Sigmoid colon (tissue), 7 donors: ENCODE measurements at regions of chr10 and their contacts with region 1.

Region 1: DNA sequence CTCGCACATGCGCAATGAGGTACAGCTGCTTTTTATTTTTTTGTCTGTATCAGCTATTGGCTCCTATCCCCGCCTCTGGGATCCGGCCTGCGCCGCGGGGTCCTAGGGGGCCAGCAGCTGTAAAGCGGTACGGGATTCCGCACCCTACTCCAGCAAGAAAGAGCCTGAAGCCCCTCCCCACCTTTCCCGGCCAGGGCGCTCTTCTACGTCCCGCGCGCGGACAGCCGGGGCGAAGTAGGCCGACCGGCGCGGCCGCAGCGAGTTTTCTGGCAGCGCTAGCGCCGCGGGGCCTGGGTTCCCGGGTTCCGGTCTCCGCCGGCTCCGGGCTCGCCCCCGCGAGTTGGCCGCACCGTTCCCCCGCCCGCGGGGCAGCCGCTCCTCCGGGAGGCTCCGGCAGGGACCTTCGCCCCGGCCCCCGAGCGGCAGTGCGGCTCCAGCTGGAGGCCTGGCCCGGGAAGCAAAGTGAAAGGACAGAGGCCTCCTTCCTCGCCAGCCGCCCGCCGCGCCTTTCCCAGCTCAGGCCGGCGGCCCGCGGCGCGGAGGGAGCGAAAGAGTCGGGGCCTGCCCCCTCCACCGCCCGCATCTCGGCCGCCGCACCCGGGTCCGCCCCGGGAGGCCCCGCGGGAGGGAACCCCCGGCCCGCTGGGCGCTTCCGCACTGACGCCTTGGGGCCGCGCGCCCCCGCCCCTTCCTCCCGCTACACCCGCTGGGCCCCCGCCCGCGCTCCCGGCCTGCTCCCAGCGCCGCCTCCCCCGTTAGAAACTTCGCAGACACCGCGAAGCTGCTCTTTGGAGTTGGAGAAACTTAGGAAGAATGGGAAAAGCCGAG is 4.7 kb upstream of the SPAG6 start:
- DNase-seq: peak; percentile 82
- H3K4me3 ChIP-seq: peak overlapping the region; percentile 53 to 84 (median 72)
- H3K27ac ChIP-seq: peak overlapping the region; percentile 91 to 98 (median 96)
- H3K4me1 ChIP-seq: peaks cover 0 to 35% (median 30%) of the 10 kb centered on the region in 4 donors
- H3K27me3 ChIP-seq: peaks cover 75 to 89% (median 79%) of the 10 kb centered on the region in 3 donors
- CTCF ChIP-seq: no peak
- EP300 ChIP-seq: no peak
- POLR2A ChIP-seq: peak; percentile 34 to 37

Region 2: GRCh38 chr10:21525367-21526183 is 815.0 kb before region 1 on chr10 and contains the start of gene SKIDA1:
- intact Hi-C with region 1: loop called (anchors 5 kb)
- DNase-seq: peak; percentile 93
- H3K4me3 ChIP-seq: peak within 1 kb of the TSS; percentile 49 to 74 (median 68)
- H3K27ac ChIP-seq: peak within 1 kb of the TSS; percentile 97 to 99 (median 98)
- H3K4me1 ChIP-seq: peaks cover 0 to 54% (median 28%) of the 10 kb centered on the region in 4 donors
- H3K27me3 ChIP-seq: no peaks in the 10 kb centered on the region
- CTCF ChIP-seq: no peak
- EP300 ChIP-seq: peak in 2 of 4 donors; percentile 17 to 42
- POLR2A ChIP-seq: no peak
- total RNA-seq, gene SKIDA1: 0.82 to 4.2 (median 3.4) TPM

Region 3: DNA sequence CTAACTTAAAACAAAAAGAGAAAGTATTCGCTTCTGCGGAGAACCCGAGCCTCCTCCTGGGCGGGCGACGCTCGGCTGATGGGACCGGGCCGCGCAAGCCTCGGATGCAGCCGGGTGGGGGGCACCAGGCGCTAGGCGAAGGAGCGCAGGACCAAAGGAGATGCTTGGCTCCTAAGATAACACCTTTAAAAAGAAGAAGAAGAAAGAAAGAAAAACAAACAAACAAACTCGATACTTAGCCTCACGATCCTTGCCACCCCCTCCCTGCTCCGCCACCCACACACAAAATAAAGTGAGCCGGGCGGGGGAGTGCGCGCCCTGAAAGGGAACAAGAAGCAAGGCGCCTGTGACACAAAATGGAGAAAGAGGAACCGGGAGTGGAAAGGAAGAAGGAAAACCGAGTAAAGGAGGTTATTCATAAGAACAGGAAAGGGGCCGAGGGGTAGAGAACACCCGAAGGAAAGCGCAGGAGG is 88.8 kb before region 1 on chr10:
- intact Hi-C with region 1: loop called (anchors 2 kb)
- DNase-seq: peak; percentile 79
- H3K4me3 ChIP-seq: peak overlapping the region; percentile 61 to 86 (median 74)
- H3K27ac ChIP-seq: peak overlapping the region; percentile 94 to 97 (median 96)
- H3K4me1 ChIP-seq: peaks cover 0 to 10% (median 5%) of the 10 kb centered on the region in 4 donors
- H3K27me3 ChIP-seq: no peaks in the 10 kb centered on the region
- CTCF ChIP-seq: no peak
- EP300 ChIP-seq: no peak
- POLR2A ChIP-seq: no peak

Region 4: DNA sequence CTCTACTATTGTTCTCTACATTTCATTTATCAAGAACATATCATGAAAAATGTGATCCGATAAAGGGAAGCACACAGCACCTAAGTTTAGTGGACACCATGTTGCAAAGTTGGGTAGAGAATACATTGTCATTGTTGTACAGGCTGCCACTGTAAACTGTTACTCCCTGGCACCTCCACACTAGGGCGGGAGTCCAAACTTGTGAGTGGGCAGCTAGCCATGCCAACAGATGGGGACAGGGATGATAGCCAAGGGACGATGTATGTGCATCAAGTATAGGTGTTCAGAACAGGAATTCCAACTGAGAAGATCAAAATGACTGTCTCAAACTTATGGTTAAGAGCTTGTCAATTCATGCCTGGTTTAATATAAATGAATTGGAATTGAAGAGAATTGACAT is 55.4 kb before region 1 on chr10:
- intact Hi-C with region 1: no loop called
- DNase-seq: no peak
- H3K4me3 ChIP-seq: no peak overlapping the region
- H3K27ac ChIP-seq: no peak overlapping the region
- H3K4me1 ChIP-seq: no peaks in the 10 kb centered on the region
- H3K27me3 ChIP-seq: no peaks in the 10 kb centered on the region
- CTCF ChIP-seq: no peak
- EP300 ChIP-seq: no peak
- POLR2A ChIP-seq: no peak

Region 5: DNA sequence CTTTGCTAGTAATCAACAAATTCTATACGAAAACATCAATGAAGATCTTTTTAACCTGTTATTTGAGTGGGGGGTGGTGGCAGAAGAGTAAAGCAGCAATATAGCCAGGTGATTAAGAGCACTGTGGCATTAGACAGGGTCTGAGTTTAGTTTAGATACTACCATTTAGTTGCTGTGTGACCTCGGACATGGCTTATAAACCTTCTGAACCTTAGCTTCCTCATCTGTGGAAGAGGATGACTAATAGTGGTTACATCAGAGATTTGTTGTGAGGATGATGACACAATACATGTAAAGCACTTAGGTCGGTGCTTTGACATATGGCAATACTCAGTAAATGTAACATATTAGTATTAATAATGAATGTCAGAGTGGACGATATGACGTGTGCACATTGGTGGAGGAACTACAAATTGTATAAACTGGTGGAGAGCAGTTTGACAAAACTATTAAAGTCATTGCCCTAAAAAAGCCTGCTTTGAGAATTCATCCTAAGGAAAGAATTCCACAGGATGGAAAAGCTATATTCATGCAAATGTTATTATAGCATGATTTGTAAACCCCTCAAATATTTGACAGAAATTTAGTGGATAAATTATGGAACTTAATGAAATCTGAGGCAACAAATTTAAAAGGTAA is 29.0 kb after region 1 on chr10:
- intact Hi-C with region 1: no loop called
- DNase-seq: no peak
- H3K4me3 ChIP-seq: no peak overlapping the region
- H3K27ac ChIP-seq: no peak overlapping the region
- H3K4me1 ChIP-seq: peaks cover 0 to 6% (median 3%) of the 10 kb centered on the region in 4 donors
- H3K27me3 ChIP-seq: peaks cover 0 to 4% (median 0%) of the 10 kb centered on the region in 3 donors
- CTCF ChIP-seq: no peak
- EP300 ChIP-seq: no peak
- POLR2A ChIP-seq: no peak

Region 6: DNA sequence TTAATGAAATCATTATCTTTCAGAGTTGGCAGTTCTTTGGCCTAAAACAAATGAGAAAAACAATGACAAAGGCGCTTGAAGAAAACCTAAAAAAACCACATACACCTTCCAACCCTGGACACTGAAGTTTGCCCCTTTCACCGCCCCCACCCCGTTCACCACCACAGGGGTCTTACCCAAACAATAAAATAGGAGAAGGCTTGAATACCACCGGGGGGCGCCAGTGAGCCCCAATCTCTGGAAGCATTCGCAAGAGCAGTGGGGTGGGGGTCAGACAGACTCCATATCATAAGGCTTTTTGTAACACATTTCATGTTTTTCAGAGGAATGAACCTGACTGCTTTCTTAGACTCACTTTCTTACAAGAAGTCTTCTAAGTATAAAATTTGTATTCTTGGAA is 210.2 kb after region 1 on chr10:
- intact Hi-C with region 1: loop called (anchors 10 kb)
- DNase-seq: no peak
- H3K4me3 ChIP-seq: no peak overlapping the region
- H3K27ac ChIP-seq: no peak overlapping the region
- H3K4me1 ChIP-seq: peaks cover 0 to 14% (median 6%) of the 10 kb centered on the region in 4 donors
- H3K27me3 ChIP-seq: no peaks in the 10 kb centered on the region
- CTCF ChIP-seq: peak in 3 of 4 experiments; percentile 10 to 45 (median 28)
- EP300 ChIP-seq: no peak
- POLR2A ChIP-seq: no peak

Region 7: DNA sequence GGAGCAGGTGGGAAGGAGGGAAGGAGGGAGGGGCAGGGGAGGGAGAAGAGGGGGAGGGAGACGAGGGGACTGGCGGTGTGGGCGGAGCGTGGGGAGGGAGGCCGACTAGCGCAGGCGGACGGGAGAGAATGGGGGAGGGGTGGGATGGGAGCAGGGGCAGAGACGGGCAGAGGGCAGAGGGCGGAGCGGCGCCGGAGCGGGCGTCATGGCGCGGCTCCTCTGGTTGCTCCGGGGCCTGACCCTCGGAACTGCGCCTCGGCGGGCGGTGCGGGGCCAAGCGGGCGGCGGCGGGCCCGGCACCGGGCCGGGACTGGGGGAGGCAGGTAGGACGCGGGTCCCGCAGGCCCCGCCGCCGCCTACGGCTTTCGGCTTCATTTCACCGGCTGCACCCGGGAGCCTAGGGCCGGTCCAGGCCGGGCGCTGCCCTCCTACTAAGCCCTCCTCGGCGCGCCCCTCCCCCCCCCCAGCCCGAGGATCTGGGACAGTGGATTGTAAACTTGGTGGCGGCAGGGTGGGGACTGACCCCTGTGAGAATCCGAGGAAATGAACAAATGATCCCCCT is 754.9 kb after region 1 on chr10 and contains the start of gene MSRB2:
- intact Hi-C with region 1: loop called (anchors 5 kb)
- DNase-seq: peak; percentile 98
- H3K4me3 ChIP-seq: peak within 1 kb of the TSS; percentile 62 to 95 (median 79)
- H3K27ac ChIP-seq: peak within 1 kb of the TSS; percentile 90 to 99 (median 96)
- H3K4me1 ChIP-seq: peaks cover 0 to 17% (median 12%) of the 10 kb centered on the region in 4 donors
- H3K27me3 ChIP-seq: no peaks in the 10 kb centered on the region
- CTCF ChIP-seq: no peak
- EP300 ChIP-seq: no peak
- POLR2A ChIP-seq: peak; percentile 45 to 55
- total RNA-seq, gene MSRB2: 32.7 to 56.3 (median 47.0) TPM